ENCODE measurements at regions of chr6 and their contacts with region 1.

Region 1: GRCh38 chr6:90098001-90098531 is 198.6 kb downstream of the BACH2 start:
- DNase-seq: peak in 5 of 14 experiments; percentile 17 to 51 (median 43)
- ATAC-seq: peak; percentile 77
- H3K4me3 ChIP-seq: no peak overlapping the region
- H3K4me3 Mint-ChIP-seq: peak overlapping the region; percentile 7
- H3K27ac ChIP-seq: no peak overlapping the region
- H3K27ac Mint-ChIP-seq: peak overlapping the region; percentile 82
- H3K4me1 ChIP-seq: peaks cover 34% of the 10 kb centered on the region
- H3K4me1 Mint-ChIP-seq: peaks cover 94% of the 10 kb centered on the region
- H3K27me3 ChIP-seq: no peaks in the 10 kb centered on the region
- H3K27me3 Mint-ChIP-seq: no peaks in the 10 kb centered on the region
- CTCF ChIP-seq: peak; percentile 3

Region 2: GRCh38 chr6:89270951-89271721 is 826.9 kb before region 1 on chr6:
- CTCF ChIA-PET with region 1: no interaction called
- POLR2A ChIA-PET with region 1: no interaction called
- intact Hi-C with region 1: no loop called
- DNase-seq: no peak
- ATAC-seq: no peak
- H3K4me3 ChIP-seq: no peak overlapping the region
- H3K4me3 Mint-ChIP-seq: no peak overlapping the region
- H3K27ac ChIP-seq: no peak overlapping the region
- H3K27ac Mint-ChIP-seq: no peak overlapping the region
- H3K4me1 ChIP-seq: no peaks in the 10 kb centered on the region
- H3K4me1 Mint-ChIP-seq: no peaks in the 10 kb centered on the region
- H3K27me3 ChIP-seq: no peaks in the 10 kb centered on the region
- H3K27me3 Mint-ChIP-seq: no peaks in the 10 kb centered on the region
- CTCF ChIP-seq: no peak

Region 3: GRCh38 chr6:90062667-90063066 is 35.4 kb before region 1 on chr6:
- CTCF ChIA-PET with region 1: no interaction called
- POLR2A ChIA-PET with region 1: no interaction called
- intact Hi-C with region 1: no loop called
- DNase-seq: no peak
- ATAC-seq: no peak
- H3K4me3 ChIP-seq: no peak overlapping the region
- H3K4me3 Mint-ChIP-seq: no peak overlapping the region
- H3K27ac ChIP-seq: no peak overlapping the region
- H3K27ac Mint-ChIP-seq: no peak overlapping the region
- H3K4me1 ChIP-seq: peaks cover 8% of the 10 kb centered on the region
- H3K4me1 Mint-ChIP-seq: peaks cover 33% of the 10 kb centered on the region
- H3K27me3 ChIP-seq: no peaks in the 10 kb centered on the region
- H3K27me3 Mint-ChIP-seq: no peaks in the 10 kb centered on the region
- CTCF ChIP-seq: no peak

Region 4: DNA sequence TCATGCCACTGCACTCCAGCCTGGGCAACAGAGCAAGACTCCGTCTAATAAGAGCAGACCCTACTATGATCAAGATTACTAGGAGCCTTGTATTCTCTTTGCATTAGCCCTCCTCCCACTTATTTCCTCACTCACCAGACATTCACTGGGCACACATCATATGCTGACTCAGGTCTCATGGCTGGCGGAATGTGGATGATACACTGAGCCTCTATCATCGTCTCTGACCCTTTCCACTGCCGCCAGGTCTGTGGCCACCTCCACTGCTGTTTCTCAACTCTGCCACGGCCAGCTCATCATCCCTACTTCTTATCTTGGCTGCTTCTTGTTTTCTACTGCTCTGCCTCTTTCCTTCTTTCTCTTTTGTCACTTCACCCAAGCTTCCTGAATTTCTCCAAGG is 37.6 kb after region 1 on chr6:
- CTCF ChIA-PET with region 1: no interaction called
- POLR2A ChIA-PET with region 1: no interaction called
- intact Hi-C with region 1: loop called in 1 of 2 experiments (anchors 5 kb)
- DNase-seq: no peak
- ATAC-seq: no peak
- H3K4me3 ChIP-seq: no peak overlapping the region
- H3K4me3 Mint-ChIP-seq: peak overlapping the region; percentile 40
- H3K27ac ChIP-seq: no peak overlapping the region
- H3K27ac Mint-ChIP-seq: peak overlapping the region; percentile 70
- H3K4me1 ChIP-seq: peaks cover 12% of the 10 kb centered on the region
- H3K4me1 Mint-ChIP-seq: peaks cover 86% of the 10 kb centered on the region
- H3K27me3 ChIP-seq: no peaks in the 10 kb centered on the region
- H3K27me3 Mint-ChIP-seq: no peaks in the 10 kb centered on the region
- CTCF ChIP-seq: no peak

Region 5: DNA sequence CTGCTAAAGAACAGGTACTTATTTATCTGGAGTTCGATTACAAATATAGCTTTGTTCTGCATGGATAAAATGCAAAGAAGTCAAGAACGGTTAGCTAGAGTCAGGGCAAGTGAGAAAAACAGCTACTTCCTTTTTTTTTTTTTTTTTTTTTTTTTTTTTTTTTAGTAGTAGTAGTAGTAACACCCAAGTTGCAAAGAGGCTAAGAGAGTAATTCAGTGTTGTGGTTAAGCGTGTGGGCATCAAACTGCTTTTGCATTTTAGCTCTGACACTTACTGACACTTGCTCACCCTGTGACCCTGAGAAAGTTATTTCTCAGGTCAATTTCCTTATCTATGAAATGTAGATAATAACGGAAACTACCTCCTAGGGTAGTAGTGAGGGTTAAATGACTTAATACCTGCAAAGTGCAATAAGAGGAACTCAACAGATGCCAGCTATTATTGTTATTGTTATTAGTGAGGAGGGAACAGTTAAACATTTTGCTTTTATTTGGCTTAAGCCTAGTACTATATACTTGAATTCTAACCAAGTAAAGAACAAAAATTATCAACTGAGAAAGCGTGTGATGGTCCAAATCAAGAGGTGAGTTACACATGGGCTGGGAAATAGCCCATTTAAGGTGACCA is 285.2 kb after region 1 on chr6:
- CTCF ChIA-PET with region 1: no interaction called
- POLR2A ChIA-PET with region 1: no interaction called
- intact Hi-C with region 1: no loop called
- DNase-seq: peak in 3 of 14 experiments; percentile 42 to 46 (median 45)
- ATAC-seq: peak; percentile 44
- H3K4me3 ChIP-seq: no peak overlapping the region
- H3K4me3 Mint-ChIP-seq: no peak overlapping the region
- H3K27ac ChIP-seq: no peak overlapping the region
- H3K27ac Mint-ChIP-seq: no peak overlapping the region
- H3K4me1 ChIP-seq: peaks cover 4% of the 10 kb centered on the region
- H3K4me1 Mint-ChIP-seq: peaks cover 24% of the 10 kb centered on the region
- H3K27me3 ChIP-seq: no peaks in the 10 kb centered on the region
- H3K27me3 Mint-ChIP-seq: peaks cover 6% of the 10 kb centered on the region
- CTCF ChIP-seq: no peak

Measured in CD4-positive, alpha-beta T cell (primary cell).